PC-9 (cell line): ENCODE measurements at regions of chr17 and their contacts with region 1.

Region 1: GRCh38 chr17:42598905-42599304 is 10.3 kb downstream of the RETREG3 start:
- DNase-seq: no peak
- H3K4me3 ChIP-seq: no peak overlapping the region
- H3K27ac ChIP-seq: no peak overlapping the region
- H3K4me1 ChIP-seq: no peaks in the 10 kb centered on the region
- H3K27me3 ChIP-seq: no peaks in the 10 kb centered on the region
- CTCF ChIP-seq: no peak

Region 2: DNA sequence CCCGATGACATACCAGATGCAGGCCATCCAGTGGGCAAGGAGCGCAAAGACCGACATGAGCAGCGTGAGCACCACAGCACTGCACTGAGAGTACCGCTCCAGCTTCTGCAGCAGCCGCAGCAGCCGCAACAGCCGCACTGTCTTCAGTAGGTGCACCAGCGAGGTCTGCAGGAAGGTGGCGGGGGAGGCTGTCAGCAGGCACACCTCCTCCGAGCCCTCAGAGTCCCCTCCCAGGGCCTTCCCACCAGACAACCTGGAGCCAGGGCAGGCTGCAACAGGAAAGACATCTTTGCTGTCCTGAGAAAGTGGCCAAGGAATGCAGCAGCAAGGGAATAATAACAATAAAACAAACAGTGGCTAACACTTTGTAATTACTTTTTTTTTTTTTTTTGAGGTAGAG is 427.1 kb before region 1 on chr17:
- CTCF ChIA-PET with region 1: interaction called, 10 read pairs
- POLR2A ChIA-PET with region 1: no interaction called
- intact Hi-C with region 1: no loop called
- DNase-seq: no peak
- H3K4me3 ChIP-seq: no peak overlapping the region
- H3K27ac ChIP-seq: no peak overlapping the region
- H3K4me1 ChIP-seq: no peaks in the 10 kb centered on the region
- H3K27me3 ChIP-seq: peaks cover 54% of the 10 kb centered on the region
- CTCF ChIP-seq: no peak

Region 3: DNA sequence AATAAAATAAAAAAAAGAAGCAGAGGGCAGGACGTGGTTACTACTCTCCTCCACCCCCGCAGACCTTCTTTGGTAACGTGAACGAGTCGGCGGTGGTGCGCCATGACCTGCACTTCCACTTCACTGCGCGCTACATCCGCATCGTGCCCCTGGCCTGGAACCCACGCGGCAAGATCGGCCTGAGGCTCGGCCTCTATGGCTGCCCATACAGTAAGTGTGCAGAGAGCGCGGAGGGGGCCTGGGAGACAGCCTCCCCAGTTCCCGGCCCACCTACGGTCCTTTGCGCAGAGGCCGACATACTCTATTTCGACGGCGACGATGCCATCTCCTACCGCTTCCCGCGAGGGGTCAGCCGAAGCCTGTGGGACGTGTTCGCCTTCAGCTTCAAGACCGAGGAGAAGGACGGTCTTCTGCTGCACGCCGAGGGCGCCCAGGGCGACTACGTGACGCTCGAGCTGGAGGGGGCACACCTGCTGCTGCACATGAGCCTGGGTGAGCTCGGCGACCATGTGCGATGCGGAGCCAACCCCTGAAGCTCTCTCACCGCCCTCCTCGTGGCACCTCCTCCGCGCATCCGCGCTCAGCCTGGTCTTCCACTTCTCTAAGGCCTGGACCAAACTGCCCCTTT is 86.1 kb after region 1 on chr17:
- CTCF ChIA-PET with region 1: interaction called, 3 read pairs
- POLR2A ChIA-PET with region 1: interaction called, 15 read pairs
- intact Hi-C with region 1: no loop called
- DNase-seq: no peak
- H3K4me3 ChIP-seq: no peak overlapping the region
- H3K27ac ChIP-seq: no peak overlapping the region
- H3K4me1 ChIP-seq: peaks cover 14% of the 10 kb centered on the region
- H3K27me3 ChIP-seq: no peaks in the 10 kb centered on the region
- CTCF ChIP-seq: no peak